ENCODE measurements at regions of chr22 and their contacts with region 1.

Region 1: DNA sequence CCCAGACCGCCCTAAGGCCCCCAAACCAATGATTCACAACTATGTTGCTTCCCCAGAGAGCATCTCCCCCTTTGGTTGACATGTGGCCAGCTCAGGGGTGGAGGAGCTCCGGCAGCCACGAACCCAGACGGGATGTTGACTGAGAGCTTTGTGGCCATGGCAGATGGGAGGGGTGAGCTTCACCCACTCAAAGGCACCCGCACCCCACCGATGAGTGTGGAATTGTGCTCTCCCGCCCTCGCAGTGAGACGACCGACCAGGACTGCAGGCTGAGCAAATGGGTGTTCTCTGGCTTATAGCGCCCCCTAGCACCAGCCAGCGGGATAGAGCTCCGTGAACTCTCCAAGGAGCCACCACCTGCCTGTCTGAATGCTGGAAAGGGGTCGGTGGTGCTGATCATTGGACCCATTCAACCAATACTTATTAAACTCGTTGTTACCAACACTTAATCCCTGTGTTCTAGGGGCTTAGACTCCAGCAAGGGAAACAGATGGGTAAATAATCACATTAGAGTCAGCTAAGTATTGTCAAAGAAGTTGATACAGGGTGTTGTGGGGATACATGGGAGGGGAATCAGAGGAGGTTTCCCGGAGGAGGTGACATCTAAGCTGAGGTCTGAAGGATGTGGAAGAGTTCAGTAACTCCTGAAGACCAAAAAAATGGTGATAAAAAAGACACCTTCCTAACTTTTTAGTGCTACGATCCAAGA is 4.5 kb upstream of the TIMP3 start:
- DNase-seq: peak; percentile 80
- ATAC-seq: peak; percentile 55

Region 2: DNA sequence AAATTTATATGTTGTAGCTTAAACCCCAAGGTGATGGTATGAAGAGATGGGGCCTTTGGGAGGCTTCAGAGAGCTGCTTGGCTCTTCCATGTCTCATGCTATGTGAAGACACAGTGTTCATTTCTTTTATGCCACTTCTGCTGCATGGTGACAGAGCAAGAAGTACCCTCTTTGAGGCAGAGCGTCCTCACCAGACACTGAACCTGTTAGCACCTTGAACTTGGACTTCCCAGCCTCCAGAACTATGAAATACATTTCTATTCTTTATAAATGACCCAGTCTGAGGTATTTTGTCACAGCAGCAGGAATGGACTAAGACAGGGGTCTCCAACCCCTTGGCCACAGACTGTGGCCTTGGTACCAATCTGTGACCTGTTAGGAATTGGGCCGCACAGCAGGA is 142.0 kb before region 1 on chr22:
- intact Hi-C with region 1: loop called (anchors 5 kb)
- DNase-seq: no peak
- ATAC-seq: no peak

Region 3: DNA sequence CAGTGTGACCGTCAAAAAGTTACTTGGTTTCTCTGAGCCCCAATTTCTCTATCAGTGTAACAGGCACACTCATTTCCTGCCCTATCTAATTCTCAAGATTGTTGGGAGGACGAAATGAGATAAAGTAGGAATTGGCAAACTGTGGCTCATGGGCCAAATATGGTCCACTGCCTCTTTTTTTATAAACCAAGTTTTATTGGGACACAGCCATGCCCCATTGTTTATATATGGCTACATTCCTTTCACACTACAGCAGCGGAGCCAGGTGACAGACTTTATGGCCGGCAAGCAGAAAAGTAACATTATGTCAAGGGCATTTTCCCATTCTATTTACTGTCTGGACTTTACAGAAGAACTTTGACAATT is 112.2 kb before region 1 on chr22:
- intact Hi-C with region 1: no loop called
- DNase-seq: no peak
- ATAC-seq: no peak

Region 4: GRCh38 chr22:32695451-32695891 is 101.5 kb before region 1 on chr22:
- intact Hi-C with region 1: no loop called
- DNase-seq: no peak
- ATAC-seq: no peak

Region 5: GRCh38 chr22:32737811-32738497 is 59.1 kb before region 1 on chr22:
- intact Hi-C with region 1: no loop called
- DNase-seq: no peak
- ATAC-seq: no peak

Measured in left ventricle myocardium superior (tissue), 1 donor.